Vagina (tissue), 2 donors: ENCODE measurements at regions of chr18 and their contacts with region 1.

Region 1: GRCh38 chr18:36608107-36608506 is 220.7 kb downstream of the TPGS2 start:
- DNase-seq: peak in 1 of 2 donors; percentile 13
- H3K4me3 ChIP-seq: no peak overlapping the region
- H3K27ac ChIP-seq: no peak overlapping the region
- H3K4me1 ChIP-seq: no peaks in the 10 kb centered on the region
- H3K27me3 ChIP-seq: no peaks in the 10 kb centered on the region
- CTCF ChIP-seq: no peak
- POLR2A ChIP-seq: no peak

Region 2: DNA sequence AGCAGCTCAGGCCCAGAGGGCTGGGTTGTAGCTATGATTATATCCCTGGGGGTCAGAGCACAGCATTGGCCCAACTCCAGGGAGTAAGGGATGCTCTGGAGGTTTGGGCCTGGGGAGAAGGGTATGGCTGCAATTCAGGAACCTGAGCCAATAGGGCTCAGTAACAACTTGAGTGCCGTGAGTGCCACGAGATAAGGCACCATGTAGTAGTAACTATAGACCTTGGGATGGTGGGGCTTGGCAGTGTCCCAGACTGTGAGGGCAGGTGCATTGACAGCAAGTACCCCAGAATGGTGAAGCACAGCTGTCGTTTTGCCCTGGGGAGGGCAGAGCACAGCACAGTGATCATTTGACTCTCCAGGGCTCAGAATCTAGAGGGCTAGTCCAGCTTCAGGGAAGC is 1185.9 kb before region 1 on chr18:
- intact Hi-C with region 1: loop called (anchors 5 kb)
- DNase-seq: no peak
- H3K4me3 ChIP-seq: no peak overlapping the region
- H3K27ac ChIP-seq: no peak overlapping the region
- H3K4me1 ChIP-seq: no peaks in the 10 kb centered on the region
- H3K27me3 ChIP-seq: no peaks in the 10 kb centered on the region
- CTCF ChIP-seq: no peak
- POLR2A ChIP-seq: no peak

Region 3: DNA sequence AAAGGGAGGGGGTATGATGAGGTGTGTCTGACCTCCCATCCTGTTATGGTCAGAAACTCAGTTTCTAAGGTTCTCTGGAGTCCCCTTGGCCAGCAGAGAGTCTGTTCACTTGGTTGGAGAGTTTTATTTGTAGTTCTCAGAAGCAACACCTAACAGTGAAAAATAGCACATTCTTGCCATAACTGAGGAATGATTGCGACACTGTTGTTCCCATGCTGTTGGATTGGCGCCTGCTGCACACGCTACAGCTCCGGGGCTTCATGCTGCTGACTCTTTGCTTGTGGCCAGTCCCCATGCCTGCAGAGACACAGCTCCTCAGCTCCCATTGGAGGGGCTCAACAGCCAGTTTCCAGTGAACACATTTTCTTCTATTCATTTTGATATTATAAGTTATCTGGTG is 178.6 kb after region 1 on chr18:
- intact Hi-C with region 1: no loop called
- DNase-seq: no peak
- H3K4me3 ChIP-seq: no peak overlapping the region
- H3K27ac ChIP-seq: no peak overlapping the region
- H3K4me1 ChIP-seq: peaks cover 15% of the 10 kb centered on the region
- H3K27me3 ChIP-seq: no peaks in the 10 kb centered on the region
- CTCF ChIP-seq: no peak
- POLR2A ChIP-seq: no peak

Region 4: DNA sequence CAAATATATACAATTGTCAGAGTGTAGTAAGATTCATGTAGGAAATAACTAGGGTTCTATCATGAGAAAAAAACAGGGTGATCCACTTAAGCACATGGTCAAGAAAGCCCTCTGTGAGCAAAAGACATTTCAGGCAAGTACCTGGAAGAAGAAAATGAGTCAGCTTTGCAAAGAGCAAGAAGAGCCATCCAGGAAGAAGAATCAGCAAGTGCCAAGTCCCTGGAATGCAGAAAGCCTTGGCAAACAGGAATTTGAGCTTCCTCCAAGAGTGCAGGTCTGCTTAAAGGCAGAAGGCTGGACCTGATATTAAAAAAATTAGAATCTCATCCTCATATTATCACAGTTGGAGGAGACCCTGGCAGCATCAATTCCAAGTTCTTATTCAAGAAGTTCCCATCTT is 1146.0 kb after region 1 on chr18:
- intact Hi-C with region 1: no loop called
- DNase-seq: no peak
- H3K4me3 ChIP-seq: no peak overlapping the region
- H3K27ac ChIP-seq: no peak overlapping the region
- H3K4me1 ChIP-seq: no peaks in the 10 kb centered on the region
- H3K27me3 ChIP-seq: no peaks in the 10 kb centered on the region
- CTCF ChIP-seq: no peak
- POLR2A ChIP-seq: no peak